ENCODE measurements at regions of chr9 and their contacts with region 1.

Region 1: GRCh38 chr9:136944519-136945279 is at the starts of genes C8G and FBXW5:
- DNase-seq: peak; percentile 78 to 96
- H3K4me3 ChIP-seq: peak within 1 kb of the TSS; percentile 68 to 95 (median 72)
- H3K27ac ChIP-seq: no peak within 1 kb of the TSS; the same call in 1 of the 2 replicates
- H3K4me1 ChIP-seq: peaks cover 0 to 18% (median 11%) of the 10 kb centered on the region in 4 experiments; a peak in 5 of 7 replicates
- H3K27me3 ChIP-seq: no peaks in the 10 kb centered on the region
- CTCF ChIP-seq: peak in 2 of 3 experiments; percentile 89 to 95; a peak in 3 of 4 replicates
- EP300 ChIP-seq: peak in 1 of 2 experiments; percentile 73; a peak in 1 of 3 replicates
- POLR2A ChIP-seq: no peak; a peak in 1 of 3 replicates
- RAD21 ChIP-seq: peak in 1 of 2 experiments; percentile 42; a peak in 3 of 4 replicates
- total RNA-seq, gene C8G: 0.80 TPM in 1 of 2 replicates, not detected in the other
- total RNA-seq, gene FBXW5: 49.0 and 49.5 TPM in 2 replicates

Region 2: DNA sequence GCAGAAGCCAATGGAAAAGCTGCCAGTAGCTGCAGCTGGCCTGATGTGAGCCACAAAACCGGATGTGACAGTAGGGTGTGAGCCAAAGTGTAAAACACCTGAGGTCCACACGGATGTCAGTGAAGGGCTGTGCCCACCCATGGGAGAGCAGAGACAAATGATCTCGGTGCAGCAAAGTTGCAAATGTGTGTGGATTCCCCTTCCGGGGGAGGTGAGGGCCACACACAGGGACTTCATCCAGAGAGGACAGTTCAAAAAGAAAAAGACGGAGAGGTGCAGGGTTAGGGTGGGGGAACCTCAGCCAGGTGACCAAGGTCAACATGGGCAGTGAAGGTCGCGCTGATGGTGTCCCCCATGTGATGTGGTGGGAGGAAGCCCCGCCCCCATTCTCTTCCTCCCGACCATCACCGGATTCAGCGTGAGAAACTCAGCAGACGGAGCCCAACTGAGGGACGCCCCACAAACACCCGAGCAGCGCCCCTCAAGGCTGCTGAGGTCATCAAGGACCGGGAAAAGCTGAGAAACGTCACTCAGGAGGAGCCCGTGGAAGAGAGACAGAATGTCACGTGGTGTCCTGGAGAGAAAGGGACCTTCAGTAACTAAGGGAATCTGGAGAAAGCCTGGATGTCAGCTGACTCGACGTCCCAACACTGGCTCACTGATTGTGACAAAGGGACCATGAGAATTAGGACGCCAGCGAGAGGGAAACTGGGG is 21.2 kb after region 1 on chr9:
- CTCF ChIA-PET with region 1: interaction called, 31 read pairs
- POLR2A ChIA-PET with region 1: no interaction called
- DNase-seq: no peak
- H3K4me3 ChIP-seq: no peak overlapping the region
- H3K27ac ChIP-seq: no peak overlapping the region
- H3K4me1 ChIP-seq: peaks cover 0 to 7% (median 5%) of the 10 kb centered on the region in 4 experiments; a peak in 4 of 7 replicates
- H3K27me3 ChIP-seq: no peaks in the 10 kb centered on the region
- CTCF ChIP-seq: no peak
- EP300 ChIP-seq: no peak
- POLR2A ChIP-seq: no peak
- RAD21 ChIP-seq: no peak

Region 3: GRCh38 chr9:137435980-137436760 is 491.5 kb after region 1 on chr9:
- CTCF ChIA-PET with region 1: no interaction called
- POLR2A ChIA-PET with region 1: no interaction called
- DNase-seq: no peak
- H3K4me3 ChIP-seq: no peak overlapping the region
- H3K27ac ChIP-seq: no peak overlapping the region
- H3K4me1 ChIP-seq: no peaks in the 10 kb centered on the region
- H3K27me3 ChIP-seq: no peaks in the 10 kb centered on the region
- CTCF ChIP-seq: no peak
- EP300 ChIP-seq: no peak
- POLR2A ChIP-seq: no peak
- RAD21 ChIP-seq: no peak